ENCODE measurements at regions of chr12 and their contacts with region 1.

Region 1: DNA sequence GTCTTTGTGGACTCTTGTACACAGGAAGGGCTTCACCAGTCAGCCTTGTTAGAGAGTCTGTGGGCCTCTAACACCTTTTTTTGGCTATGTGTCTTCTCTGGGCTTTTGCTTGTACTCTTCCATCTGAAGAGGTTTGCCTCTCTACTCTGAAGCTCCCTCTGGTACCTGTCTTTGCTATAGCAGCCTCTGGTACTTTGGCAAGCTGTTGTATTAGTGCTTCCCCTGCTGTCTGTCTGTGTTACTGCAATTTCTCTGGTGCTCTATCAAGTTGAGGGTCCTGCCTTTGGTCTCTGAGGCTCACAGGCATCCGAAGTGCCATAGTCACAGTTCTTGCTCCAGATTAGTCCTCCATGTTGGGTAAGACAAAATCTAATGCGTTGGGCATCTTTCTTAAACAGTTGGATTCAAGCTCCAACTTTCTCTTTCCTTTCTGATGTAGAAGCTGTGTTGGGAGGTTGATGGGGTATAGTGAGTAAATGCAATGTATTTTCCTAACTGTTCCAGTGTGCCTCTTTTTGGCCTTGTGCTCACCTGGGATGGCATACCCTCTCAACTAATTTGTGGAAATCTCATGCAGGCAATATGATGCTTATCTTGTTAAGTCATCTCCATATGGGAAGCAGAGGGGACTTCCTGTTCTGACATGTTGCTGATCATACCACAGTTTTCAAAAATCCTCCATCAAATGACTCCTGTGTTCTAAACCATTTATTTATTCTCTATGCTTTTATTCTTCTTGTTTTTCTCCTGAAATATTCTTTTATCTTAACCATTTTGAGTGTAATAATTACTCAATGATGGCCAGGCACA is 88.8 kb downstream of the ATF7IP start:
- DNase-seq: peak; percentile 56
- ATAC-seq: peak; percentile 99
- H3K4me3 Mint-ChIP-seq: no peak overlapping the region
- H3K27ac Mint-ChIP-seq: peak overlapping the region; percentile 86
- H3K4me1 Mint-ChIP-seq: peaks cover 49% of the 10 kb centered on the region
- H3K27me3 Mint-ChIP-seq: no peaks in the 10 kb centered on the region
- CTCF ChIP-seq: peak; percentile 72

Region 2: GRCh38 chr12:14185427-14186192 is 268.7 kb before region 1 on chr12:
- CTCF ChIA-PET with region 1: interaction called, 14 read pairs
- POLR2A ChIA-PET with region 1: no interaction called
- DNase-seq: peak; percentile 47
- ATAC-seq: peak; percentile 87
- H3K4me3 Mint-ChIP-seq: no peak overlapping the region
- H3K27ac Mint-ChIP-seq: no peak overlapping the region
- H3K4me1 Mint-ChIP-seq: peaks cover 11% of the 10 kb centered on the region
- H3K27me3 Mint-ChIP-seq: no peaks in the 10 kb centered on the region; the same call in 1 of the 2 replicates
- CTCF ChIP-seq: peak; percentile 61

Region 3: GRCh38 chr12:14239350-14239934 is 214.9 kb before region 1 on chr12:
- CTCF ChIA-PET with region 1: interaction called, 59 read pairs
- POLR2A ChIA-PET with region 1: no interaction called
- DNase-seq: peak; percentile 34
- ATAC-seq: peak; percentile 80
- H3K4me3 Mint-ChIP-seq: peak overlapping the region; percentile 48
- H3K27ac Mint-ChIP-seq: peak overlapping the region; percentile 35
- H3K4me1 Mint-ChIP-seq: peaks cover 26% of the 10 kb centered on the region
- H3K27me3 Mint-ChIP-seq: no peaks in the 10 kb centered on the region
- CTCF ChIP-seq: no peak